ENCODE measurements at regions of chr3 and their contacts with region 1.

Region 1: DNA sequence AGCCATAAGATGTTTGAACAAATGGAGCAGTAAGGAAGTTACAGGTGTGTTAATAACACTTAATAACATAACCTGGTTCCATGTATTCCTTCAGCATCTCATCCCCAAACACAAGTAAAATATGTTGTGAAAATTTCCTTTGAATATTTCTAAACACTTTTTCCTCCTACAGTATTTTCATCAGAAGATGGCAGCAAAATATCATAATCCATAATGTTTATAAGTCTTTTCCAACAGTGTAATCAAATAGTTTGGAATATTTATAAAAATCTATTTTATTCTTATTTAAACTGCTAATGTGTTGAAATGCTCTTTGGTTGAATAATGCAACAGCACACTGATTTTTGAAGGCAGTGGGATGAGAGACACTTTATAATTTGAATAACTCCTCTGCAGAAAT is 1020.5 kb downstream of the OTOL1 start:
- DNase-seq: peak; percentile 14
- ATAC-seq: no peak
- H3K4me3 ChIP-seq: no peak overlapping the region
- H3K27ac ChIP-seq: no peak overlapping the region
- H3K4me1 ChIP-seq: no peaks in the 10 kb centered on the region
- H3K27me3 ChIP-seq: no peaks in the 10 kb centered on the region
- CTCF ChIP-seq: peak; percentile 28; the same call in 1 of the 2 replicates

Region 2: DNA sequence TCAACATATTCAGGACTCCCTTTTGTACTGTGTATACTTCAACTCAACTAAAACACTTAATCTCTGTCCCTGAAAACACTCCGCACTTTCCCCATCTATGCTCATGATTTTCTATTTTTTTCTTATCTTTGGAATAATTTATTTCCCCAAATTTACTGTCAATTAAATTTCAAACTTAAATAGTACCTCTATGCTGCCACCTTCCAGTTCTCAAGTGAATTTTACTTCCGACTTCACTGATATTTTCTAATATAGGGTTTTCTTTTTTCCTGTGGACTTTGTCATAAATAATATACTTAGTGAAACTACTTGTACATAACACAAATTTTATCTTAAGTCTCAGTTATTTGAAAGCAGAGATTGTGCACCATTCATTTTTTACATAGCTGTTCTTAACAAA is 282.8 kb after region 1 on chr3:
- CTCF ChIA-PET with region 1: no interaction called
- POLR2A ChIA-PET with region 1: no interaction called
- intact Hi-C with region 1: loop called (anchors 2 kb)
- DNase-seq: peak; percentile 10
- ATAC-seq: no peak
- H3K4me3 ChIP-seq: no peak overlapping the region
- H3K27ac ChIP-seq: no peak overlapping the region
- H3K4me1 ChIP-seq: no peaks in the 10 kb centered on the region
- H3K27me3 ChIP-seq: no peaks in the 10 kb centered on the region
- CTCF ChIP-seq: peak; percentile 56

Region 3: GRCh38 chr3:163043074-163043473 is 526.0 kb after region 1 on chr3:
- CTCF ChIA-PET with region 1: no interaction called
- POLR2A ChIA-PET with region 1: no interaction called
- intact Hi-C with region 1: loop called (anchors 1 kb)
- DNase-seq: peak; percentile 62
- ATAC-seq: peak; percentile 76
- H3K4me3 ChIP-seq: no peak overlapping the region
- H3K27ac ChIP-seq: no peak overlapping the region
- H3K4me1 ChIP-seq: no peaks in the 10 kb centered on the region
- H3K27me3 ChIP-seq: no peaks in the 10 kb centered on the region
- CTCF ChIP-seq: peak; percentile 81

Measured in PC-3 (cell line).